ENCODE measurements at regions of chr17 and their contacts with region 1.

Region 1: GRCh38 chr17:29807520-29808351 is 122.3 kb downstream of the SSH2 start:
- DNase-seq: peak; percentile 26 to 75 (median 64)
- ATAC-seq: peak; percentile 93
- H3K4me3 ChIP-seq: no peak overlapping the region
- H3K4me3 Mint-ChIP-seq: peak overlapping the region in 3 of 10 donors; percentile 1 to 56 (median 30)
- H3K27ac ChIP-seq: no peak overlapping the region
- H3K27ac Mint-ChIP-seq: peak overlapping the region in 4 of 9 donors; percentile 6 to 43 (median 38)
- H3K4me1 ChIP-seq: peaks cover 0 to 10% of the 10 kb centered on the region in 2 donors
- H3K4me1 Mint-ChIP-seq: peaks cover 13 to 36% (median 25%) of the 10 kb centered on the region in 7 donors
- H3K27me3 ChIP-seq: no peaks in the 10 kb centered on the region
- H3K27me3 Mint-ChIP-seq: no peaks in the 10 kb centered on the region

Region 2: GRCh38 chr17:29640413-29640812 is 167.3 kb before region 1 on chr17:
- CTCF ChIA-PET with region 1: interaction called, 5 read pairs
- POLR2A ChIA-PET with region 1: no interaction called
- intact Hi-C with region 1: loop called in 1 of 2 experiments (anchors 1 kb)
- DNase-seq: no peak
- ATAC-seq: no peak
- H3K4me3 ChIP-seq: no peak overlapping the region
- H3K4me3 Mint-ChIP-seq: no peak overlapping the region
- H3K27ac ChIP-seq: no peak overlapping the region
- H3K27ac Mint-ChIP-seq: peak overlapping the region in 8 of 9 donors; percentile 40 to 88 (median 61)
- H3K4me1 ChIP-seq: no peaks in the 10 kb centered on the region
- H3K4me1 Mint-ChIP-seq: peaks cover 0 to 35% (median 19%) of the 10 kb centered on the region in 7 donors
- H3K27me3 ChIP-seq: no peaks in the 10 kb centered on the region
- H3K27me3 Mint-ChIP-seq: no peaks in the 10 kb centered on the region

Region 3: DNA sequence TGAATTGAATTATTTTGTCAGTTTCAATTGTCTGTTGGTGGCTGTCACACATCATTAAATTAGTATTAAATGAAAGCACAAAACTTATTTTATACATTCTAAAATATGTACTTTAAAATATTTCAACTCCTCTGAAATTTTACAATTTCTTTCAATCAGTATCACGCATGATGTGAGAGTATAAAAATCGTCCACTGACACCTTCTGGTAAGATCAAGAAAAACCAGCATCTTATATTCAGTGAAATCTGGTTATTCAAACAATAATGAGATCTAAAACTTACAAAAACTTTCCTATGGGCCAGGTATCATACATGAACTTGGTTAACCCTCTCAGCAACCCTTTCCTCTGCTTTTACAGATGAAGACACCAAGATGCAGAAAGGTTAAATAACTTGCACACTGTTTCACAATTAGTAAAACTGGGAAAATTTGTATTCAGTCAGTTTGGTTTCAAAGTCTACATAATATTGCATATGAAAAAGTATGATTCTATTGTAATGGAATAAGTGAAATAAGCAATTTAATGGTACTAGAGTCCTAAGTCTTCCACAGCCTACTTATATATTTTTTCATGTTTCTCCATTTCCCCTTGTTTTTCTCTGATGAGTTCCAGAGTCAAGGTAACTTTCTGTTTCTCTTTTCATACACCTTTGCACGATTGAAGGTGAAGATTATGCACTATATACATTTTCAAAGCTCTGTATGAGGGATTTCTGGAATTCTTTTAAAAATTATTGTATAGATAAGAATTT is 192.4 kb after region 1 on chr17:
- CTCF ChIA-PET with region 1: interaction called, 15 read pairs
- POLR2A ChIA-PET with region 1: no interaction called
- intact Hi-C with region 1: loop called (anchors 1 kb)
- DNase-seq: peak in 2 of 9 donors; percentile 1 to 5
- ATAC-seq: no peak
- H3K4me3 ChIP-seq: no peak overlapping the region
- H3K4me3 Mint-ChIP-seq: peak overlapping the region in 9 of 10 donors; percentile 18 to 79 (median 56)
- H3K27ac ChIP-seq: no peak overlapping the region
- H3K27ac Mint-ChIP-seq: peak overlapping the region in 7 of 9 donors; percentile 12 to 81 (median 32)
- H3K4me1 ChIP-seq: no peaks in the 10 kb centered on the region
- H3K4me1 Mint-ChIP-seq: peaks cover 5 to 14% (median 13%) of the 10 kb centered on the region in 7 donors
- H3K27me3 ChIP-seq: no peaks in the 10 kb centered on the region
- H3K27me3 Mint-ChIP-seq: peaks cover 0 to 6% (median 0%) of the 10 kb centered on the region in 5 donors

Region 4: DNA sequence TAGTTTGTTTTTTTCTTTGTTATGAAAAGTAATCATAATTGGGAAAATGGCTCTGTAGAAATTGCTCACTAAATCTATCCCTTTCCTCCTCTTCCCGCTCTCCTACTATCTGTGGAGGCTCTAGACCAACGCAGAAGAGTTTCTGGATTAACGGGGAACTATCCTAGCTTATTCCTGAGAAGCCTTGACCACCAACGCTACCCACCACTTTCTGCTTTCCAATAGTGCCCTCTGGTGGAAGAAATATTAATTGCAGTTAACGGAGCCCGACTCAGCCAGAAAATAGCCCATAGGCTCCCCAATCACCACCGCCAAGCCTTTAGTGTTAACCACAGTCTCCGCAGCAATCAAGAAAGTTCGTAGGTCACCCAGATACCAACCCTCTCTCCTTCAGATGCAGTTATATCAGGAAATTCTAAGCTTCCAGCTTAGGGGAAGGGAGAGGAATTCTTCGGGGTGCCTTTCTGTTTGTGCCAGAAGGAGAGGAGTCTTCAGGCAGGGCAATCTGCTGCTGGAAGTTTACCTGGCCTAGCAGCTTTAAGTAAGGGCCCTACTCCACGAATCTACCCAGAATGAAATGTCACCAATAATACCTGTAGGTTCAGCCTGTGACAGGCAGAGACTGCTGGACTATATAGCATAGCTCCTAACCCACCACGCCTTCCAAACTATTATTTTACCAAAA is 285.9 kb after region 1 on chr17:
- CTCF ChIA-PET with region 1: interaction called, 13 read pairs
- POLR2A ChIA-PET with region 1: no interaction called
- intact Hi-C with region 1: loop called (anchors 1 to 2 kb)
- DNase-seq: peak; percentile 13 to 71 (median 40)
- ATAC-seq: peak; percentile 78
- H3K4me3 ChIP-seq: no peak overlapping the region
- H3K4me3 Mint-ChIP-seq: peak overlapping the region in 1 of 10 donors; percentile 11
- H3K27ac ChIP-seq: no peak overlapping the region
- H3K27ac Mint-ChIP-seq: no peak overlapping the region
- H3K4me1 ChIP-seq: no peaks in the 10 kb centered on the region
- H3K4me1 Mint-ChIP-seq: peaks cover 0 to 8% (median 5%) of the 10 kb centered on the region in 7 donors
- H3K27me3 ChIP-seq: no peaks in the 10 kb centered on the region
- H3K27me3 Mint-ChIP-seq: peaks cover 21 to 56% (median 33%) of the 10 kb centered on the region in 5 donors

Measured in naive thymus-derived CD4-positive, alpha-beta T cell (primary cell).